Right cardiac atrium (tissue), 5 donors: ENCODE measurements at regions of chr5 and their contacts with region 1.

Region 1: GRCh38 chr5:141618804-141619554 is at the start of gene DIAPH1:
- DNase-seq: peak; percentile 98 to 99 (median 98)
- ATAC-seq: peak; percentile 97
- H3K4me3 ChIP-seq: peak within 1 kb of the TSS; percentile 75
- H3K27ac ChIP-seq: peak within 1 kb of the TSS; percentile 69
- H3K4me1 ChIP-seq: no peaks in the 10 kb centered on the region
- H3K27me3 ChIP-seq: no peaks in the 10 kb centered on the region
- total RNA-seq, gene DIAPH1: 15.8 to 53.0 (median 19.2) TPM

Region 2: DNA sequence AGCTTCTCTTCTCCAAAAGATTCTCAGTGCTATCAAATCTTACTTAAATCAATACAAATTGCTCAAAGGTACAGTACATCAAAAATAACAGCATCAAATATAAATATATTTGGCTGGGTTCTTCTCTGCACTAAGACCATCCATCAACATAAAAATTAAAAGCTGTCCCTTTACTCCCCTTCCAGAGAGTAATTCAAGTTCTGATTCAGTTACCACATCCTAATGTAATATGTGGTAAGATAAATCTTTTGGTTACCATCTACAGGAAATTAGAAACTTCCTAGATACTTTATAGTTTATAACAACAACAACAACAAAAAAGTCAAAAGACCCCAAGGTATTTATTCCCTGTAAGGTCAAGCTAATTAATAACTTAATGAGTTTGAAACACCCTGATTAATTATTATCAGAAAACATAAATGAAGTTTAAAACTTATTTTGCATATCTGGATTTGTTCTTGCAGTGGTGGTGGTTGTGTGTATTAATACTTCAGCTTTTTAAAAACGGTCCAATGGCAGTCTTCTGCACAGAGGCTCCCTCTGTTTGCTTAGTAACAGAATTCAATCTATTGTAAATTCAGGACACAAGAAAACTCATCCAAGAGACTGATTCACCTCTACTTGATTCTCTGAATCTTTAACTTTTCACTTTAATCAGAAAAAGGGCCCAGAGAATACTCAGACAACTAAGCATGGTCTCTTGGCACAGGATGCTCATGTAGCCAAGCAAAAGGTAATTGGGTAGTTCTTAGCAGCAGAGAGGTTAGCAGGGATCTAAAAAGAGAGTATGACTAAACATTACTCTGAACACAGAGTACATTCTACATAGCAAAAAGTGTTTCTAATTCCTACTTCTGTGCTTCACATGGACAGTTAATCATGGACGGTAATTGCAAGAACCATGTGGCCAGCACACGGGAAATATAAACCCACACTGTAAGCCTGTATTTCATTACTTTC is 20.3 kb before region 1 on chr5:
- intact Hi-C with region 1: loop called in 1 of 4 experiments (anchors 2 kb)
- DNase-seq: no peak
- ATAC-seq: peak; percentile 54 to 59
- H3K4me3 ChIP-seq: no peak overlapping the region
- H3K27ac ChIP-seq: no peak overlapping the region
- H3K4me1 ChIP-seq: no peaks in the 10 kb centered on the region
- H3K27me3 ChIP-seq: no peaks in the 10 kb centered on the region